CD8-positive, alpha-beta memory T cell (primary cell): ENCODE measurements at regions of chr11 and their contacts with region 1.

Region 1: DNA sequence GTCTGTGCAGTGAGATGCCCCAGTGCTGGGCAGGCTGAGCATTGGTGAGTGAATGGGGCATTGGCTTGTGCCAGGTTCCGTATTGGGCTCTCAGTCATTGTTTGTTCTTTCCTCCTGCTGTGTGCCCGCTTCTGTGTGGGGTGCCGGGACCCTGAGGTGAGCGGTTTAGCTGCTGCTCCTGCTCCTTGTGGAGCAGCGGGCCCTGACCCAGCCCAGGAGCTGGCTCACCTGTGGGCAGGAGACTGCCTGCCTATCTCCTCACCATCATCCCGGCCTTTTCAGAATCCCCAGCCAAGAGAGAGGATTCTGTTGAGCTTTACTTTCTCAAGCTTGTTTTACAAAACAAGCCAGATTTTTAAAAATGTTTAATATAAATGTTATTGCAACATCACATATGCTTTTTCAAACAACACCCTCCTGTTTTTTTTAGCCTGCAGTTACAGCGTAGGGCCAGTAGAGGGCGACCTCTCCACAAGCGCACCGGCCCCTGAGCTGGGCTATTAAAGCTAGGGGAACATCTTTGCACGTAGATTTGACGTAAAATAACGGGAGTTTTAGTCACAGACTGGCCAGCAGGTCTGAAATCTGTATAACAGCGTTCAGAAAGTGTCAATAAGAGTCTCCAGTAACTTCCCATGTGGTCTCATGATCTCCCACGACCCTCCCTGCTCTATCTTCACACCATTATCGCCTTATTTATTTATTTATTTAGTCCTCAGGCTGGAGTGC is 25.1 kb upstream of the RELT start:
- DNase-seq: peak; percentile 25 to 74 (median 68)
- H3K4me3 ChIP-seq: no peak overlapping the region
- H3K4me3 Mint-ChIP-seq: no peak overlapping the region
- H3K27ac ChIP-seq: no peak overlapping the region
- H3K27ac Mint-ChIP-seq: peak overlapping the region in 5 of 8 donors; percentile 43 to 83 (median 50)
- H3K4me1 ChIP-seq: no peaks in the 10 kb centered on the region
- H3K4me1 Mint-ChIP-seq: peaks cover 4 to 6% (median 4%) of the 10 kb centered on the region in 3 donors
- H3K27me3 ChIP-seq: no peaks in the 10 kb centered on the region
- H3K27me3 Mint-ChIP-seq: peaks cover 3 to 10% of the 10 kb centered on the region in 2 donors

Region 2: GRCh38 chr11:73335204-73335923 is 15.7 kb before region 1 on chr11:
- CTCF ChIA-PET with region 1: interaction called, 21 read pairs
- POLR2A ChIA-PET with region 1: no interaction called
- DNase-seq: peak; percentile 62 to 83 (median 72)
- H3K4me3 ChIP-seq: no peak overlapping the region
- H3K4me3 Mint-ChIP-seq: no peak overlapping the region
- H3K27ac ChIP-seq: no peak overlapping the region
- H3K27ac Mint-ChIP-seq: no peak overlapping the region
- H3K4me1 ChIP-seq: no peaks in the 10 kb centered on the region
- H3K4me1 Mint-ChIP-seq: no peaks in the 10 kb centered on the region
- H3K27me3 ChIP-seq: no peaks in the 10 kb centered on the region
- H3K27me3 Mint-ChIP-seq: peaks cover 0 to 6% of the 10 kb centered on the region in 2 donors

Region 3: DNA sequence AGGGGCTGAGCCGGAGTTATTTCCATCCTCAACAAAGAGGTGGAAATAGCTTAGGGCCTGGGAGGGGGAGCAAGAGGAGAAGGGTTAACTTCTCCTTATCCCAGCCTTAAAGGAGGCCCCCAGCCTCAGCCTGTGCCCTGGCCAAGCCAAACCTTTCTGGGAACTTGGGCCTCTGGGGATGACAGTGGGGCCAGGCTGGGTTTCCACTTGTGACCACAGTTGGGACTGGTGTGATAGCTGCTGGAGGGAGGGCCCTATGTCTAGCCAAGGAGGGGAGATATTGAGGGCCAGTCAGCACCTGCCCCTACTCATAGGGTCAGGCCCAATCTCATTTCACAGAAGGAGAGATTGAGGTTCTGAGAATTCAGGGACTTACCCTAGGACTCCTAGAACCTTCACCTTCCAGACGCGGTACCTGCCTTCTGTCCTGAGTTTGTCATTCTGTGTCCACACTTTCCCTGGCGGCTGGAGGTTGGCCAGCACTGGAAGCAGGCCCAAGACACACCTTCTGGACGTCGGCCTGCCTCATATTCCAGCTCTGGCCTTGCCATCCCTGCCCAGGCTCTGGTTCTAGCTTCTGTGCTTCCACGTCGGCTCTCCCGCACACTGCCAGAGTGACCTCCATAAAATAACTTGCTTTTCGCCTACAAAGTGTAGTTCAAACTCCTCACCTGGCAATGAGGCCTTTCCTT is 28.3 kb after region 1 on chr11:
- CTCF ChIA-PET with region 1: interaction called, 31 read pairs
- POLR2A ChIA-PET with region 1: no interaction called
- DNase-seq: no peak
- H3K4me3 ChIP-seq: no peak overlapping the region
- H3K4me3 Mint-ChIP-seq: peak overlapping the region in 6 of 7 donors; percentile 2 to 82 (median 32)
- H3K27ac ChIP-seq: peak overlapping the region; percentile 24
- H3K27ac Mint-ChIP-seq: peak overlapping the region; percentile 68 to 98 (median 77)
- H3K4me1 ChIP-seq: peaks cover 37% of the 10 kb centered on the region
- H3K4me1 Mint-ChIP-seq: peaks cover 42 to 80% (median 52%) of the 10 kb centered on the region in 3 donors
- H3K27me3 ChIP-seq: no peaks in the 10 kb centered on the region
- H3K27me3 Mint-ChIP-seq: peaks cover 0 to 9% of the 10 kb centered on the region in 2 donors

Region 4: GRCh38 chr11:73393479-73394380 is 42.7 kb after region 1 on chr11:
- CTCF ChIA-PET with region 1: interaction called, 190 read pairs
- POLR2A ChIA-PET with region 1: interaction called, 5 read pairs
- DNase-seq: peak; percentile 49 to 78 (median 55)
- H3K4me3 ChIP-seq: no peak overlapping the region
- H3K4me3 Mint-ChIP-seq: peak overlapping the region in 2 of 7 donors; percentile 37 to 54
- H3K27ac ChIP-seq: no peak overlapping the region
- H3K27ac Mint-ChIP-seq: peak overlapping the region in 5 of 8 donors; percentile 16 to 65 (median 42)
- H3K4me1 ChIP-seq: no peaks in the 10 kb centered on the region
- H3K4me1 Mint-ChIP-seq: peaks cover 5 to 6% (median 6%) of the 10 kb centered on the region in 3 donors
- H3K27me3 ChIP-seq: no peaks in the 10 kb centered on the region
- H3K27me3 Mint-ChIP-seq: peaks cover 0 to 3% of the 10 kb centered on the region in 2 donors

Region 5: DNA sequence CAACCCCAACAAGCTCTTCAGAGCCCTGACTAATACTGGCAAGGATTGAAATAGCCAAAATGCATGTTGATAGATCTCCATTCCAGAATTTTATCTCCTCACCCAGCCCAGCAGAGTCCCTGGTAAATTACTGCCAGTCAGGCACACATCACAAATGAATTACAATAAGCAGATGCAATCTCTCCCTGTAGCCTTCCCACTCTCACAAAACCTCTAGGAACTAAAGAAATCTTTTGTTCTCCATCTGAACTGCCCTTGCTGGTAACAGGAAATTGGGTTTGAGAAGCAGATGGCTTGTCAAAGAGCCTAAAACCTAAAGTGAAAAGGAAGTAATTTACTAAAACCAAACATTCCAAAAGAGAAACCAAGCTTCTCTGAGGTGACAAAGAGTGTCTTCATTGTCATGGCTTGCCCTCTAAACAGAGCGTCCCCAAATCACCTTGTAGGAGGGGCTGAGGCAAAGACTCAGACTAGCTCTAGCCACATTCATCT is 187.4 kb after region 1 on chr11:
- CTCF ChIA-PET with region 1: no interaction called
- POLR2A ChIA-PET with region 1: no interaction called
- DNase-seq: peak in 1 of 5 donors; percentile 5
- H3K4me3 ChIP-seq: no peak overlapping the region
- H3K4me3 Mint-ChIP-seq: peak overlapping the region in 4 of 7 donors; percentile 4 to 19 (median 12)
- H3K27ac ChIP-seq: no peak overlapping the region
- H3K27ac Mint-ChIP-seq: peak overlapping the region in 7 of 8 donors; percentile 25 to 79 (median 66)
- H3K4me1 ChIP-seq: peaks cover 18% of the 10 kb centered on the region
- H3K4me1 Mint-ChIP-seq: peaks cover 20 to 42% (median 37%) of the 10 kb centered on the region in 3 donors
- H3K27me3 ChIP-seq: no peaks in the 10 kb centered on the region
- H3K27me3 Mint-ChIP-seq: no peaks in the 10 kb centered on the region

Region 6: GRCh38 chr11:73625696-73626318 is 274.7 kb after region 1 on chr11:
- CTCF ChIA-PET with region 1: interaction called, 12 read pairs
- POLR2A ChIA-PET with region 1: no interaction called
- DNase-seq: peak; percentile 55 to 76 (median 62)
- H3K4me3 ChIP-seq: no peak overlapping the region
- H3K4me3 Mint-ChIP-seq: peak overlapping the region in 1 of 7 donors; percentile 21
- H3K27ac ChIP-seq: no peak overlapping the region
- H3K27ac Mint-ChIP-seq: no peak overlapping the region
- H3K4me1 ChIP-seq: no peaks in the 10 kb centered on the region
- H3K4me1 Mint-ChIP-seq: peaks cover 0 to 3% (median 2%) of the 10 kb centered on the region in 3 donors
- H3K27me3 ChIP-seq: peaks cover 5% of the 10 kb centered on the region
- H3K27me3 Mint-ChIP-seq: peaks cover 11 to 26% of the 10 kb centered on the region in 2 donors